ENCODE measurements at regions of chr1 and their contacts with region 1.

Region 1: GRCh38 chr1:87131809-87132283 is 196.8 kb upstream of the LMO4 start:
- DNase-seq: peak; percentile 53 to 68 (median 64)
- H3K4me3 ChIP-seq: peak overlapping the region; percentile 14 to 41
- H3K4me3 Mint-ChIP-seq: peak overlapping the region; percentile 82 to 91 (median 86)
- H3K27ac ChIP-seq: no peak overlapping the region
- H3K27ac Mint-ChIP-seq: no peak overlapping the region
- H3K4me1 ChIP-seq: peaks cover 6% of the 10 kb centered on the region
- H3K4me1 Mint-ChIP-seq: peaks cover 3 to 13% (median 9%) of the 10 kb centered on the region in 4 donors
- H3K27me3 ChIP-seq: no peaks in the 10 kb centered on the region
- H3K27me3 Mint-ChIP-seq: peaks cover 20 to 31% of the 10 kb centered on the region in 2 donors

Region 2: DNA sequence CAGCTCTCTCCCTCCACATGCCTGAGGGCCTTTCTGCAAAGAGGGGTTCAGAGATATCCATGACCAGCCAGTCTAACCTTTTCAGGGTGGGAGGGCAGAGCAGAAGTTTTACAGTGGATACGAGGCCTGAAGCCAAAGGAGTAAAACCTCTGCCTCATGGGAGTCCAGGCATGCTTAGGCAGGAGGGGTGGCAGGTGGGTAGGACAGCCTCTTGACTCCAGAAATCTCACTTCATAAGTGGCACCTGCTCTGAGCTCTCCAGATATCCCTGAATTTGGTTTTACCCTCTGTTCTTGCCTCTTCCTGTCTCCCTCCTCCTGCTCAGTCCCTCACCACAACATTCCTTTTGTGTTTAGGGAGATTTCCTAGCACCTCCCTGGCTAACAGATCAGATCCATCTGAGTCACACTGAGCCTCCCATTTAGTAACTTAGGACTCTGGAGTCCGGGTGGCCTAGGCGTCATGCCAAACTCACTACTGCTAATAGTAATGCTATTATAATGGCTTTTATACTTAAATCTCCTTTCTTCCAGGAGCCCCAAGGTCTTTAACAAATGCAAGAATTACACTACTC is 16.4 kb before region 1 on chr1:
- CTCF ChIA-PET with region 1: interaction called, 23 read pairs
- POLR2A ChIA-PET with region 1: no interaction called
- intact Hi-C with region 1: no loop called
- DNase-seq: no peak
- H3K4me3 ChIP-seq: no peak overlapping the region
- H3K4me3 Mint-ChIP-seq: no peak overlapping the region
- H3K27ac ChIP-seq: no peak overlapping the region
- H3K27ac Mint-ChIP-seq: peak overlapping the region in 2 of 7 donors; percentile 39 to 48
- H3K4me1 ChIP-seq: no peaks in the 10 kb centered on the region
- H3K4me1 Mint-ChIP-seq: no peaks in the 10 kb centered on the region
- H3K27me3 ChIP-seq: no peaks in the 10 kb centered on the region
- H3K27me3 Mint-ChIP-seq: no peaks in the 10 kb centered on the region

Region 3: GRCh38 chr1:88061492-88062177 is 929.8 kb after region 1 on chr1:
- CTCF ChIA-PET with region 1: no interaction called
- POLR2A ChIA-PET with region 1: no interaction called
- intact Hi-C with region 1: loop called (anchors 5 kb)
- DNase-seq: no peak
- H3K4me3 ChIP-seq: no peak overlapping the region
- H3K4me3 Mint-ChIP-seq: no peak overlapping the region
- H3K27ac ChIP-seq: no peak overlapping the region
- H3K27ac Mint-ChIP-seq: no peak overlapping the region
- H3K4me1 ChIP-seq: no peaks in the 10 kb centered on the region
- H3K4me1 Mint-ChIP-seq: no peaks in the 10 kb centered on the region
- H3K27me3 ChIP-seq: no peaks in the 10 kb centered on the region
- H3K27me3 Mint-ChIP-seq: peaks cover 2 to 9% of the 10 kb centered on the region in 2 donors

Region 4: DNA sequence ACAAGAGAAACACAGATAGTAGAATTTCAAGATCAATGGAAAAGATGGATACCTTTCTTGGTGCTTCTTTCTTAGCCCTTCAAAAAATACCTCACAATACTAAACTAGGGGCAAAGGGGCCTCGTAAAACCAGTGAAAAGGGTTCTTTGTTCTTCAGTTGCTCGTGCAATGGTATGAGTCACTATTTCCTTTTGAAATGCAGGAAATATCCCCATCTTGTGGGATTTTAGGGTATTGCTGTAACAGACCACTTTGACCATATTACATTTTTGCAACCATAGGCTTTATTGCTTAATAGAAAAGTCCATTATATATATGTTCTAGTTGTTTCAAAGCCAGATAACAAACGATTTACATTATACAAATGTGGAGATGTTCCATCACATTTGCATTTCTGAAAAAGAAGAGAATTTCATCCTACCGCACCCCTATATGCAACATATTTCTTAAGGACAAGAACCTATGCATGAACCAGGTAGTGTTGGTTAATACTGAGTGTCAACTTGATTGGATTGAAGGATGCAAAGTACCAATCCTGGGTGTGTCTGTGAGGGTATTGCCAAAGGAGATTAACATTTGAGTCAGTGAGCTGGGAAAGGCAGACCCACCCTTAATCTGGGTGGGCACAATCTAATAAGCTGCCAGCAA is 1463.6 kb after region 1 on chr1:
- CTCF ChIA-PET with region 1: no interaction called
- POLR2A ChIA-PET with region 1: no interaction called
- intact Hi-C with region 1: loop called (anchors 1 kb)
- DNase-seq: peak in 4 of 5 donors; percentile 27 to 39 (median 30)
- H3K4me3 ChIP-seq: no peak overlapping the region
- H3K4me3 Mint-ChIP-seq: no peak overlapping the region
- H3K27ac ChIP-seq: no peak overlapping the region
- H3K27ac Mint-ChIP-seq: no peak overlapping the region
- H3K4me1 ChIP-seq: no peaks in the 10 kb centered on the region
- H3K4me1 Mint-ChIP-seq: peaks cover 0 to 1% (median 0%) of the 10 kb centered on the region in 4 donors
- H3K27me3 ChIP-seq: no peaks in the 10 kb centered on the region
- H3K27me3 Mint-ChIP-seq: peaks cover 5 to 6% of the 10 kb centered on the region in 2 donors

Measured in CD4-positive, alpha-beta memory T cell (primary cell).